ENCODE measurements at regions of chr13 and their contacts with region 1.

Region 1: GRCh38 chr13:51978796-51979556 is 32.3 kb downstream of the ATP7B start:
- DNase-seq: no peak
- ATAC-seq: peak in 7 of 8 donors; percentile 49 to 84 (median 65)
- H3K4me3 ChIP-seq: no peak overlapping the region
- H3K27ac ChIP-seq: peak overlapping the region in 2 of 10 donors; percentile 2 to 13
- H3K4me1 ChIP-seq: peaks cover 0 to 24% (median 0%) of the 10 kb centered on the region in 9 donors
- H3K27me3 ChIP-seq: no peaks in the 10 kb centered on the region
- CTCF ChIP-seq: no peak

Region 2: GRCh38 chr13:52011632-52012511 is 32.9 kb after region 1 on chr13 and contains the start of gene ALG11:
- intact Hi-C with region 1: loop called in 1 of 10 experiments (anchors 2 kb)
- DNase-seq: peak; percentile 99 to 100
- ATAC-seq: peak; percentile 100
- H3K4me3 ChIP-seq: peak within 1 kb of the TSS; percentile 80 to 97 (median 93)
- H3K27ac ChIP-seq: peak within 1 kb of the TSS; percentile 72 to 89 (median 85)
- H3K4me1 ChIP-seq: peaks cover 0 to 34% (median 27%) of the 10 kb centered on the region in 9 donors
- H3K27me3 ChIP-seq: peaks cover 0 to 19% (median 0%) of the 10 kb centered on the region in 7 donors
- CTCF ChIP-seq: peak in 1 of 9 donors; percentile 5
- total RNA-seq, gene ALG11: 16.5 to 24.9 (median 22.2) TPM